Panc1 (cell line): ENCODE measurements at regions of chr9 and their contacts with region 1.

Region 1: GRCh38 chr9:17810728-17811571 is 232.1 kb downstream of the SH3GL2 start:
- DNase-seq: peak; percentile 8
- ATAC-seq: no peak
- H3K4me3 ChIP-seq: no peak overlapping the region
- H3K27ac ChIP-seq: no peak overlapping the region
- H3K4me1 ChIP-seq: no peaks in the 10 kb centered on the region
- H3K27me3 ChIP-seq: no peaks in the 10 kb centered on the region
- CTCF ChIP-seq: peak; percentile 49; the same call in 1 of the 2 replicates

Region 2: GRCh38 chr9:18208154-18209059 is 397.5 kb after region 1 on chr9:
- CTCF ChIA-PET with region 1: interaction called, 4 read pairs
- POLR2A ChIA-PET with region 1: no interaction called
- in situ Hi-C with region 1: no loop called
- intact Hi-C with region 1: loop called (anchors 2 kb)
- DNase-seq: no peak
- ATAC-seq: no peak
- H3K4me3 ChIP-seq: no peak overlapping the region
- H3K27ac ChIP-seq: no peak overlapping the region
- H3K4me1 ChIP-seq: no peaks in the 10 kb centered on the region
- H3K27me3 ChIP-seq: no peaks in the 10 kb centered on the region
- CTCF ChIP-seq: peak; percentile 40